Kidney (tissue), 22 donors: ENCODE measurements at regions of chr15 and their contacts with region 1.

Region 1: GRCh38 chr15:47987908-47988532 is 132.8 kb upstream of the SLC24A5 start:
- DNase-seq: peak in 3 of 5 donors; percentile 44 to 84 (median 76)
- H3K4me3 ChIP-seq: no peak overlapping the region
- H3K27ac ChIP-seq: no peak overlapping the region
- H3K4me1 ChIP-seq: no peaks in the 10 kb centered on the region
- H3K27me3 ChIP-seq: no peaks in the 10 kb centered on the region
- CTCF ChIP-seq: peak; percentile 64

Region 2: GRCh38 chr15:47203993-47204392 is 784.0 kb before region 1 on chr15:
- intact Hi-C with region 1: loop called (anchors 5 kb)
- DNase-seq: no peak
- H3K4me3 ChIP-seq: no peak overlapping the region
- H3K27ac ChIP-seq: no peak overlapping the region
- H3K4me1 ChIP-seq: no peaks in the 10 kb centered on the region
- H3K27me3 ChIP-seq: no peaks in the 10 kb centered on the region
- CTCF ChIP-seq: no peak

Region 3: GRCh38 chr15:47542312-47542989 is 445.6 kb before region 1 on chr15:
- intact Hi-C with region 1: no loop called
- DNase-seq: no peak
- H3K4me3 ChIP-seq: no peak overlapping the region
- H3K27ac ChIP-seq: no peak overlapping the region
- H3K4me1 ChIP-seq: no peaks in the 10 kb centered on the region
- H3K27me3 ChIP-seq: no peaks in the 10 kb centered on the region
- CTCF ChIP-seq: no peak

Region 4: GRCh38 chr15:47708161-47708980 is 279.6 kb before region 1 on chr15:
- intact Hi-C with region 1: loop called (anchors 10 kb)
- DNase-seq: no peak
- H3K4me3 ChIP-seq: no peak overlapping the region
- H3K27ac ChIP-seq: no peak overlapping the region
- H3K4me1 ChIP-seq: no peaks in the 10 kb centered on the region
- H3K27me3 ChIP-seq: no peaks in the 10 kb centered on the region
- CTCF ChIP-seq: no peak